Transverse colon (tissue), 4 donors: ENCODE measurements at regions of chr2 and their contacts with region 1.

Region 1: GRCh38 chr2:160269803-160270570 is 69.9 kb upstream of the ITGB6 start:
- DNase-seq: peak; percentile 84
- H3K4me3 ChIP-seq: peak overlapping the region; percentile 34 to 48 (median 38)
- H3K27ac ChIP-seq: peak overlapping the region; percentile 87 to 92 (median 90)
- H3K4me1 ChIP-seq: peaks cover 0 to 31% (median 15%) of the 10 kb centered on the region in 4 donors
- H3K27me3 ChIP-seq: no peaks in the 10 kb centered on the region
- CTCF ChIP-seq: peak; percentile 57 to 88 (median 65)
- EP300 ChIP-seq: no peak
- POLR2A ChIP-seq: peak; percentile 62

Region 2: GRCh38 chr2:160210599-160211138 is 59.3 kb before region 1 on chr2:
- in situ Hi-C with region 1: no loop called
- intact Hi-C with region 1: no loop called
- DNase-seq: peak; percentile 87
- H3K4me3 ChIP-seq: no peak overlapping the region
- H3K27ac ChIP-seq: peak overlapping the region in 1 of 4 donors; percentile 16
- H3K4me1 ChIP-seq: peaks cover 13 to 44% (median 24%) of the 10 kb centered on the region in 4 donors
- H3K27me3 ChIP-seq: no peaks in the 10 kb centered on the region
- CTCF ChIP-seq: peak; percentile 65 to 90 (median 81)
- EP300 ChIP-seq: no peak
- POLR2A ChIP-seq: no peak

Region 3: DNA sequence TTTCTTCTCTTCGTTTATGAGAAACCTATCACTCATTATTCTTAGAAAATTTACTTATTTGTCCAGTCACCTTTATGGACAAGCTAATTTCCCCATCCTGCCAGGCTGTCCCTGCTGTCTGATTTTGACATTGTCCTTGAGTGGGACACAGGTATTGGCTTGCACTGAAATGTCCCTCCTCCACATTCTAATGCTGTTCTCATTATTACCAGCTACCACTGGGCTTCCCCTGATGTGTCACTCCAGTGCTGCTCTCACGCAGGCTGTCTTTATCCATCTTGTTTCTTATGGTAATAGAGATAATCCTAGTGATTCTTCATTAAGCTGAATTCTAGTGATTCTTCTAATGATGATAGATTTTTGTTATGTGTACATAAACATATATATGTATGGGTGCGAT is 271.8 kb after region 1 on chr2:
- in situ Hi-C with region 1: no loop called
- intact Hi-C with region 1: no loop called
- DNase-seq: no peak
- H3K4me3 ChIP-seq: no peak overlapping the region
- H3K27ac ChIP-seq: no peak overlapping the region
- H3K4me1 ChIP-seq: no peaks in the 10 kb centered on the region
- H3K27me3 ChIP-seq: no peaks in the 10 kb centered on the region
- CTCF ChIP-seq: no peak
- EP300 ChIP-seq: no peak
- POLR2A ChIP-seq: no peak

Region 4: DNA sequence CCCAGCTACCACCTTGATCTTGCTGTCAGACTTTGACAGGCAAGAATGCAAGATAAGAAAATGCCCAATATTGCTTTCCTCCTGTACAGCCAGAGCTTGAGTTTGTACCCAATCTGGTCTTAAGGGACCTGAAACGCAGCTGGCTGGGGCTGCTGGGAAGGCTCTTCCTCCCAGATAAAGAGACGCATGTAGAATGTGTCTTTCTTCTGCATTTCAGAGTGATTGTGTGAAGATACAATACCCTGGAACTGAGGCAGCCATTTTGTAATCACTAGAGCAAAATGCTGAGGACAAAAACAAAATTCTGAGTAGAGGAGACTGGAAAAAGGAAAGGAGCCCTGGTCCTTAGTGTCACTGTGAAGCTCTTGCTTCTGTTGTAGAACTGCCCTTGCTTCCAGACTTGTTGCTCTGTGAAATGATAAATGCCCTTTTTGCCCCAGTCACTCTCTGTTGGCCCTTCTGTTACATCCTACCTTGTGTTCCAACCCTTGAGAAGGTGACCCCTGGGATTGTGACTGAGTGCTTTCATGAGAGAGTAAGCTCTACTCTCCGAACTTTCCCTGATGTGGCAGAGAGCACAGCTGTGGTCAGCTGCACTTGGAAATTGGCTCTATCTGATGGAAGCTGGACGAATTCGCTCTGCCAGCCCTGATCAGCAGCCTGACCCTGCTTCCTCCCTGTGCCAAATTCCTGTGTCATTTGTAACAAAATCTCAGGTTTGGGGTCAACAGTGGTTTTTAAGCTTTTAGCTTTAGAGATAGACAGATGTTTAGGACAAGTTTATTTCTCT is 361.0 kb after region 1 on chr2:
- in situ Hi-C with region 1: no loop called
- intact Hi-C with region 1: no loop called
- DNase-seq: no peak
- H3K4me3 ChIP-seq: no peak overlapping the region
- H3K27ac ChIP-seq: no peak overlapping the region
- H3K4me1 ChIP-seq: peaks cover 0 to 7% (median 3%) of the 10 kb centered on the region in 4 donors
- H3K27me3 ChIP-seq: no peaks in the 10 kb centered on the region
- CTCF ChIP-seq: no peak
- EP300 ChIP-seq: no peak
- POLR2A ChIP-seq: no peak

Region 5: DNA sequence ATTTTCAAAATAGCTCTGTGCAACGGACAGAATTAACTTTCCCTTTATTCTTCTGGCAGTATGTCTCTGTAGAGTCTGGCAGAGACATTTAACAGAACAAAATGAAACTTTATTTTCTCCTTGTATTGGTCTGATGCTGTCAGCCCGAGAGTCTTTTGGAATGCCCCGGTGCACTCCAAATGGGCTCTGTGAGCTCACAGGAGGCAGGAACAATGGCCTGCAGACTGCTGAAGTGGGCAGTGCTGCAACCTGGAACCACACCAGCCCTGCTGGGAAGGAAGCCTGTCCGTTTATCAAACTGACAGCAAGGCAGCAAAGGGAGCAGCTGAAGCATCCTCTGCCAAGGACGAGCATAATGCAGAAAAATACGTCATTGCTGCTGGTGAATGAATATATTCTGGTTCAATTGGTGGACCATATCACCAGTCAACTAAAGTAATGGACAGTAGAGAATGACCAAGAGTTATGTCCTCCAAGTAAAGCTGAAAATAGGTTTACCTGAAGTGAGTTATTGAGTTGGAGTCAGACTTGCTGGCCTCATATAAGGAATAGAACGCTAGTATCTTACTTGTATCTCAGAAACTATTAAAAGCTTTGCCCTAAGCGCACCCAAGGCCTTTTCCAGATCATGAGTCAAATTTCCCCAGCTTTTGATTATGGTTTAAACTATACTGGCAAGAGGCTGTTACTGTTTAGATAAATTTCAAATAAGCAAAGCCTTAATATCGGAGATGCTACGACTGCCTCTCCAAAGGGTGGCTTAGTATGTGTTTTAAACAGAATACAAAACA is 682.7 kb after region 1 on chr2:
- in situ Hi-C with region 1: no loop called
- intact Hi-C with region 1: loop called (anchors 10 kb)
- DNase-seq: peak; percentile 20
- H3K4me3 ChIP-seq: no peak overlapping the region
- H3K27ac ChIP-seq: peak overlapping the region; percentile 25 to 72 (median 68)
- H3K4me1 ChIP-seq: peaks cover 0 to 5% (median 3%) of the 10 kb centered on the region in 4 donors
- H3K27me3 ChIP-seq: no peaks in the 10 kb centered on the region
- CTCF ChIP-seq: no peak
- EP300 ChIP-seq: no peak
- POLR2A ChIP-seq: no peak

Region 6: DNA sequence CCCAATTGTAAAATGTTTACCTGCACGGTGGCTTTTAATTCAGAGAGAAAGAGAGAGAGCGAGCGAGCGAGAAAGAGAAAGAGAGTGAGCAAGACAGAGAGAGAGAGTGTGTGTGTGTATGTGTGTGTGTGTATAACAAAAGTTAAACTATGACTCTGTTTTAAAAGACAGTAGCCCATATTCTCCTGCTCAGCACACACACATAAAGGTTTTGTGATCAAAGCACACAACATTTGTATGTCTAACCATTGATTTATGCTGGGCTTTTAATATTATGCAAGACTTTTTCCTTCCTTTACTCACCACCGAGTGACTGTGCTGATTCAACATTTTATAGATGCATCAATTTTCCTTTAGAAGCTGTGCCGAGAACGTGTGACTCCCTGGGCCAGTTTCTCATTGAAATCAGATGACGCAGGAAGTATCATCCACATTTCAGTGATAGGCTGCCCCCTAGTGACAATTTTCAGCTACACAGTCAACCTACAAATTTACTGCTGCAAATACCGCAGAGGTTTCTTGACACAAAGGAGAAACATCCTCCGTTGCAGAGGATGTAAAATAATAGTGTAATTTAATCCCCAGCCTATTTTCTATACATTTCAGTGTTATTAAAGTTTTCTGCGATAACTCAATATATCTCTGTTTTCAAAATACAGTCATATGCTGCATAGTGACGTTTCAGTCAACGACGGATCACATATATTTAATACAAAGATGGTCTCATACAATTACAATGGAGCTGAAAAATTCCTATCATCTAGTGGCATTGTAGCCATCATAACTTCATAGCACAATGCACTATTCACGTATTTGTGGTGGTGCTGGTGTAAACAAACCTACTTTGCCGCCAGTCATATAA is 724.4 kb after region 1 on chr2:
- in situ Hi-C with region 1: loop called in 2 of 4 experiments (anchors 25 kb)
- intact Hi-C with region 1: no loop called
- DNase-seq: peak; percentile 75
- H3K4me3 ChIP-seq: no peak overlapping the region
- H3K27ac ChIP-seq: peak overlapping the region in 3 of 4 donors; percentile 4 to 41 (median 32)
- H3K4me1 ChIP-seq: no peaks in the 10 kb centered on the region
- H3K27me3 ChIP-seq: no peaks in the 10 kb centered on the region
- CTCF ChIP-seq: peak; percentile 79 to 84 (median 83)
- EP300 ChIP-seq: no peak
- POLR2A ChIP-seq: no peak